Heart left ventricle (tissue), 16 donors: ENCODE measurements at regions of chr7 and their contacts with region 1.

Region 1: GRCh38 chr7:134954197-134955082 is 31.9 kb upstream of the AGBL3 start:
- DNase-seq: no peak
- ATAC-seq: peak in 1 of 4 donors; percentile 48
- H3K4me3 ChIP-seq: no peak overlapping the region
- H3K27ac ChIP-seq: no peak overlapping the region
- H3K4me1 ChIP-seq: no peaks in the 10 kb centered on the region
- H3K27me3 ChIP-seq: no peaks in the 10 kb centered on the region
- CTCF ChIP-seq: peak; percentile 40 to 70 (median 53)
- POLR2A ChIP-seq: no peak

Region 2: GRCh38 chr7:134632937-134633540 is 321.4 kb before region 1 on chr7:
- intact Hi-C with region 1: loop called in 1 of 10 experiments (anchors 5 kb)
- DNase-seq: no peak
- ATAC-seq: peak in 2 of 4 donors; percentile 46 to 60
- H3K4me3 ChIP-seq: no peak overlapping the region
- H3K27ac ChIP-seq: no peak overlapping the region
- H3K4me1 ChIP-seq: peaks cover 0 to 22% (median 4%) of the 10 kb centered on the region in 12 donors
- H3K27me3 ChIP-seq: peaks cover 0 to 8% (median 0%) of the 10 kb centered on the region in 9 donors
- CTCF ChIP-seq: peak; percentile 21 to 60 (median 41)
- POLR2A ChIP-seq: no peak

Region 3: DNA sequence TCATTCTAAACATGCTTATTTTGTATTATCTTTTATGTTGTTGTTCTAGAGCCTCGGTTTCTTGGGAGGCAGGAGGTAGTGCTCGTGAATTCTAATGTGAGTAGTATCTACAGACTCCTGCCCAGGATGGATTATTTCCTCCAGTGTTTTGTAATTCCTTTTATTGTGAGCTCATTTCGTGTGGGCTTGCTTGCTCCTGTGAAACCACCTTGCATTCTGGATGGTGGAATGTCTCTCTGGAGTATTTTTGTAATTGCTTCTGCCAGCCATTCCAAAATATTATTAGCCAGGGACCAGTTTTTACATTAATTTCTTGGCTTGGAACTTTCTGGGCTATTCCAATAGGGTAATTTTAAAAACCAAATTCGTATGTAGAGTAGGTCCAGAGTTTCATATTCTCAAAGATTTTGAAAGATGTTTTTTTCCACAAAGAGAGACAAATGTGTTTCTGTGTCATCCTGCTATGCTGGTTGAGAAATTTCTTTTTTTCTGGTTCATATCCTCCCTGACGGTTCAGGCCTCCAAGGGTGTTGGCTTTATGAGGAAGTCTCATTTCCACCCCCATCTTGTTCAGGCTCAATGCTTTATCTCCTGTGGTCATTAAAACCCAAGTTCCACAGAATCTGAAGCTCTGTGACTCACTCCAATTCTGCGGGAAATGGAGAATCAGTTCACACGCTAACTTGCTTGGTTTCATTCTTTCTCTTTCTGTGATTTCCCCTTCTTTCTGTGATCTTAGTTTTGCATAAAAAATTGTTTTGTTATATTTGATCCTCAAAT is 216.7 kb before region 1 on chr7:
- intact Hi-C with region 1: no loop called
- DNase-seq: no peak
- ATAC-seq: peak; percentile 47 to 78 (median 62)
- H3K4me3 ChIP-seq: peak overlapping the region in 3 of 12 donors; percentile 8 to 25 (median 9)
- H3K27ac ChIP-seq: peak overlapping the region in 9 of 12 donors; percentile 43 to 75 (median 53)
- H3K4me1 ChIP-seq: peaks cover 0 to 41% (median 2%) of the 10 kb centered on the region in 12 donors
- H3K27me3 ChIP-seq: no peaks in the 10 kb centered on the region
- CTCF ChIP-seq: no peak
- POLR2A ChIP-seq: no peak